Pancreas (tissue), 10 donors: ENCODE measurements at regions of chr19 and their contacts with region 1.

Region 1: DNA sequence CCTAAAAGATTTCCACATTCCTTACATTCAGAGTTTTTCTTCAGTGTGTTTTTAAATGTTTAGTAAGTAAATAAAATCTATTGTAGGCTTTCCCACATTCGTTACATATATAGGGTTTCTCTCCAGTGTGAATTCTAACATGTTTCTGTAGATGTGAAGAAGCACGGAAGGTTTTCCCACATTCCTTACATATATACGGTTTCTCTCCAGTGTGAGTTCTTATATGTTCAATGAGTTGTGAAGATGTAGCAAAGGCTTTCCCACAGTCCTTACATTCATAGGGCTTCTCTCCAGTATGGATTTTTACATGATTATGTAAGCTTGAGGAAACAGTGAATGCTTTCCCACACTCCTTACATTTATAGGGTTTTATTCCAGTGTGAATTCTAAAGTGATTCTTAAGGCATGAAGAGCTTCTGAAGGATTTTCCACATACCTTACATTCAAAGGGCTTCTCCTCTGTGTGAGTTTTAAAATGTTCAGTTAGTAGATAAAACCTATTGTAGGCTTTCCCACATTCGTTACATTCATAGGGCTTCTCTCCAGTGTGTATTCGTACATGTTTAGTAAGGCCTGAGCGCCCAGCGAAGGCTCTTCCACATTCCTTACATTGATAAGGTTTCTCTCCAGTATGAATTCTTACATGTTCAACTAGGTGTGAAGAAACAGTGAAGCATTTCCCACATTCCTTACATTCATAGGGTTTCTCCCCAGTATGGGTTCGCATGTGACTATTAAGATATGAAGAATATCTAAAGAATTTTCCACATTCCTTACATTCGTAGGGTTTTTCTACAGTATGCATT is 18.2 kb downstream of the ZNF121 start:
- DNase-seq: no peak
- ATAC-seq: no peak
- H3K4me3 ChIP-seq: no peak overlapping the region
- H3K27ac ChIP-seq: no peak overlapping the region
- H3K4me1 ChIP-seq: no peaks in the 10 kb centered on the region
- H3K27me3 ChIP-seq: no peaks in the 10 kb centered on the region
- CTCF ChIP-seq: no peak

Region 2: GRCh38 chr19:9354651-9355050 is 211.5 kb before region 1 on chr19:
- intact Hi-C with region 1: loop called in 1 of 3 experiments (anchors 10 kb)
- DNase-seq: no peak
- ATAC-seq: no peak
- H3K4me3 ChIP-seq: no peak overlapping the region
- H3K27ac ChIP-seq: no peak overlapping the region
- H3K4me1 ChIP-seq: no peaks in the 10 kb centered on the region
- H3K27me3 ChIP-seq: no peaks in the 10 kb centered on the region
- CTCF ChIP-seq: no peak

Region 3: DNA sequence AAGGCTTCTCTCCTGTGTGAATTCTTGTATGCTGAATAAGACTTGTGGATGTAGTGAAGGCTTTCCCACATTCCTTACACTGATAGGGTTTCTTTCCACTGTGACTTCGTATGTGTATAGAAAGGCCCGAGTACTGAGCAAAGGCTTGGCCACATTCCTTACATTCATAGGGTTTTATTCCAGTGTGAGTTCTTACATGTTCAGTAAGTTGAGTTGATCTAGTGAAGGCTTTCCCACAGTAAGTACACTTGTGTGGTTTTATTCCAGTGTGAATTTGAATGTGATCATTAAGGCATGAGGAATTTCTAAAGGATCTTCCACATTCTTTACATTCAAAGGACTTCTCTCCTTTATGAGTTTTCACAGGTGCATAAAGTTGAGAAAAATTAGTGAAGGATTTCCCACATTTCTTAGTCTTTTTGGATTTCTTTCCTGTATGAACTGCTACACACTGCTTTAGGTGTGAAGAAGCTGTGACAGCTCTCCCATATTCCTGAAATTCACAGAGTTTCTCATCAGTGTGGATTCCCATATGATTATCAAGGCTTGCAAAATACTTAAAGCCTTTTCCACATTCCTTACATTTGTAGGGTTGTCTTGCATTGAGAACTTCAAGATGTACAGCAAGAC is 44.5 kb after region 1 on chr19:
- intact Hi-C with region 1: no loop called
- DNase-seq: no peak
- ATAC-seq: no peak
- H3K4me3 ChIP-seq: no peak overlapping the region
- H3K27ac ChIP-seq: no peak overlapping the region
- H3K4me1 ChIP-seq: no peaks in the 10 kb centered on the region
- H3K27me3 ChIP-seq: no peaks in the 10 kb centered on the region
- CTCF ChIP-seq: no peak